ENCODE measurements at regions of chr3 and their contacts with region 1.

Region 1: GRCh38 chr3:177574251-177574743 is 377.0 kb upstream of the TBL1XR1 start:
- DNase-seq: no peak
- ATAC-seq: no peak
- H3K4me3 ChIP-seq: no peak overlapping the region
- H3K27ac ChIP-seq: no peak overlapping the region
- H3K4me1 ChIP-seq: no peaks in the 10 kb centered on the region
- H3K27me3 ChIP-seq: no peaks in the 10 kb centered on the region
- CTCF ChIP-seq: no peak

Region 2: DNA sequence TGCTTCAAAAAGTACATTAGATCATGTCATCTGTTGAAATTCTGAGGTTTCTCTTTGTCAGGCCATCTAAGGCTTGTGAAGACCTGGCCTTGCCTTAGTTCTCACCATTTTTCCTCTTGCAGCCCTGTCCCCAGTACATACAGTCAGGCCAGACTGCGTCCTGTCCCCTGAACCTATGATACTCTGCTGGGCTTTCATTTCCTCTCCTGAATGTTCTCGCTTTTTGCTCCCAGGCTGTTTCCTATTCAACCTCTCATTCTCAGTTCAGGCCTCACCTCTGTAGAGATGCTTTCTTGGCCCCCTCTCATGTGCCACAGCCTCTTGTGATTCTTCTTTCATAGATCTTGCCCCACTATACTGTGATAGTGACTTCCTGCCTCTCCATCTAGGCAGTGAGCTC is 313.2 kb after region 1 on chr3:
- CTCF ChIA-PET with region 1: interaction called, 10 read pairs
- POLR2A ChIA-PET with region 1: no interaction called
- intact Hi-C with region 1: no loop called
- DNase-seq: no peak
- ATAC-seq: no peak
- H3K4me3 ChIP-seq: no peak overlapping the region
- H3K27ac ChIP-seq: no peak overlapping the region
- H3K4me1 ChIP-seq: no peaks in the 10 kb centered on the region
- H3K27me3 ChIP-seq: no peaks in the 10 kb centered on the region
- CTCF ChIP-seq: no peak

Measured in PC-3 (cell line).